ENCODE measurements at regions of chr1 and their contacts with region 1.

Region 1: GRCh38 chr1:204446370-204447111 is 34.9 kb upstream of the PPP1R15B start:
- DNase-seq: peak; percentile 82
- H3K4me3 ChIP-seq: no peak overlapping the region; a peak in 1 of 4 replicates
- H3K27ac ChIP-seq: no peak overlapping the region
- H3K4me1 ChIP-seq: no peaks in the 10 kb centered on the region; a peak in 1 of 4 replicates
- H3K27me3 ChIP-seq: no peaks in the 10 kb centered on the region
- CTCF ChIP-seq: peak; percentile 74
- EP300 ChIP-seq: no peak
- RAD21 ChIP-seq: peak; percentile 72

Region 2: GRCh38 chr1:204456826-204457442 is 10.4 kb after region 1 on chr1:
- CTCF ChIA-PET with region 1: interaction called, 20 read pairs
- POLR2A ChIA-PET with region 1: no interaction called
- DNase-seq: no peak
- H3K4me3 ChIP-seq: no peak overlapping the region
- H3K27ac ChIP-seq: no peak overlapping the region
- H3K4me1 ChIP-seq: no peaks in the 10 kb centered on the region; a peak in 1 of 4 replicates
- H3K27me3 ChIP-seq: no peaks in the 10 kb centered on the region
- CTCF ChIP-seq: no peak
- EP300 ChIP-seq: no peak
- RAD21 ChIP-seq: no peak

Region 3: DNA sequence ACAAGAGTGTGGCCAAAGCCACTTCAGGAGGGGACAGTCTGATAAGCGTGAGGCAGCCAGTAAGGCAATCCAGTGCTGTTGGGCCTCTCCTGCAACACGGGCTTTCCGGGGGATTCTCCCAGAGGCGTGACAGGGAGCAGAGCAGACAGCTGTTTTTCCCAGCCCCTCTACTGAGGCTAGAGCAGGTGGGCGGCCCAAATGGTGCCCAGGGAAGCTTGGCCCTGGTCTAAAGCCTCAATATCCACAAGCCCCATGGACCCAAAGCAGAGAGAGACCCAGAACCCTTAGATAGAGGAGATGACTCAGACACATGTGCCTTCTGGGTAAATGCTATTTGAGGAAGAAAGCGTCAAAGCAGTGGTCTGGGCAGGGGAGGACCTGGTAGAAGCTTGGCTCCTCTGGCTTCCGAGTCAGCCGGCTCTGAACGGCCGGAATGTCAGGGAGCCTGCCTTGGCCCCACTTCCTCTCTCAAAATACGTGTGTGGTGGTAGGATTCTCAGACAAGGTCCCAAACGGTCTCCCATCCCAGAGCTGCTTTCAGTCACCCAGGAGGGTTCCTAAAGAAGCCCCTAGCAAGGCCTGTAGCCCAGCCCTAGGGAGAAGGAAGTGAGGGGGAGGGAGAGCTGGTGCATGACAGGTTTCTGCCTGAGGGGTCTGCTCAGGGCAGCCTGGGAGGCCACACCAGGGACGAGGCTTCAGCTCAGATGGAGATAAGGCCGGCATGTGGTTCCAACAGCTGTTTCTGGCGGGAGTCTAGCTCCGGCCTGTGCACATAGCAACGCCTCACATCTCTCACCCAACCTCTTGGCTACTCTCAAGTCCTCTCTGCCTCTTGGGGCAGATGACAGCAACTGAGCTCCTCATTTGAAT is 19.2 kb after region 1 on chr1:
- CTCF ChIA-PET with region 1: interaction called, 12 read pairs
- POLR2A ChIA-PET with region 1: no interaction called
- DNase-seq: peak; percentile 46
- H3K4me3 ChIP-seq: no peak overlapping the region
- H3K27ac ChIP-seq: no peak overlapping the region
- H3K4me1 ChIP-seq: peaks cover 0 to 12% of the 10 kb centered on the region in 2 experiments; a peak in 1 of 4 replicates
- H3K27me3 ChIP-seq: no peaks in the 10 kb centered on the region
- CTCF ChIP-seq: no peak
- EP300 ChIP-seq: no peak
- RAD21 ChIP-seq: no peak

Region 4: DNA sequence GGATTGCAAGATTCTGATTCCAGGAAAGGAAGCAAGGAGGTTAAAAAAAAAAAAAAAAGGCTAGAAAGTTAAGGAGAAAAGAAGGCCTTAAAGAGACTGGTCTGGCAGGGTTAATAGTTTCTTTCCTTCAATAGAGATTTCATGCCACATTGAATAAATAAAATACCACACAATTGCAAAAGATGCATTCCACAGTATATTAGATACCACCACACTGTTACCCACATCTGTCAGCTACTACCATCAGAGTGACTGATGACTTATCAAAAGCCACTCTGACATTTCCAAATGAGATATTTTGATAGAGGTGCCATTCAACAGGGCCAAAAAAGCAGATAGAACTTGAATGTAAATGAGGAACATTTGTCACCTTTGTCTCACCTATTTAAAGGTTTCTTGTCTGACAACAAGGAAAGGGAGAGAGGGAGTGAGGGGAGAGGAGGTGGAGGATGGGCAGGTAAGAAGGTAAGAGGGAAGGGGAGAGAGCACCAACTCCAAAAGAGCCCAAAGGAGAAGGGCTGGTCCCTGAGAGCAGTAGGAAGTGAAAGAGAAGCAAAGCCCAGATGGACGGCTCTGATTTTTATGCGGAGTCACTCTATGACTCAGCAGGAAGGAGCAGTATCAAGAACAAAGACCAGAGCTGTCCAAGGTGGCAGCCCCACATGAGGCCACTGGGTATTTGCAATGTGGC is 200.7 kb after region 1 on chr1:
- CTCF ChIA-PET with region 1: no interaction called
- POLR2A ChIA-PET with region 1: no interaction called
- DNase-seq: no peak
- H3K4me3 ChIP-seq: no peak overlapping the region
- H3K27ac ChIP-seq: no peak overlapping the region
- H3K4me1 ChIP-seq: peaks cover 0 to 5% of the 10 kb centered on the region in 2 experiments; a peak in 1 of 4 replicates
- H3K27me3 ChIP-seq: no peaks in the 10 kb centered on the region; the same call in 1 of the 2 replicates
- CTCF ChIP-seq: no peak
- EP300 ChIP-seq: no peak
- RAD21 ChIP-seq: no peak

Region 5: GRCh38 chr1:204711947-204712701 is 265.6 kb after region 1 on chr1:
- CTCF ChIA-PET with region 1: no interaction called
- POLR2A ChIA-PET with region 1: no interaction called
- DNase-seq: peak; percentile 58
- H3K4me3 ChIP-seq: no peak overlapping the region
- H3K27ac ChIP-seq: no peak overlapping the region
- H3K4me1 ChIP-seq: peaks cover 0 to 11% of the 10 kb centered on the region in 2 experiments; a peak in 1 of 4 replicates
- H3K27me3 ChIP-seq: peaks cover 17% of the 10 kb centered on the region; the same call in 1 of the 2 replicates
- CTCF ChIP-seq: no peak
- EP300 ChIP-seq: no peak
- RAD21 ChIP-seq: no peak